Heart right ventricle (tissue), 16 donors: ENCODE measurements at regions of chr5 and their contacts with region 1.

Region 1: DNA sequence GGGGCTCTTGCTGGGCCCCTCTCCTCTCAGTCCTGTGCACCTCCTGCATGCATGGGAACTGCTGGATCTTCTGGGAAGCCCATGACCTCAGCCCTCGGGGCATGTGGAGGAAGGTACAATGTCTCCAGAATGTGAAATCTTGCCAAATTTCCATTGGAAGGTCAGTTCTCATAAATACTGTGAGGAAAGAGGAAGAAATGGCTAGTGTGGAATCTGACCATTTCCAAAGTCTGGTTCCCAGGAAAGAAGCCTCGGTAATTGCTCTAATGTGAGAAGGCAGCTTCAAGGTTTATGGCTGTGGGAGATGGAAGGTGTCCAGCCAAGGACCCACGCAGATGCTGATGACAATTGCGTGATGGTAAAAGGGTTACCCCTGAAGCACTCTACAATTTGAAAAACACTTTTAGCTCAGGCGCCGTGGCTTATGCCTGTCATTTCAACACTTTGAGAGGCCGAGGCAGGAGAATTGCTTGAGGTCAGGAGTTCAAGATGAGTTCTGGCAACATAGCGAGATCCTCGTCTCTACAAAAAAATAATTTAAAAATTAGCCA is 8.1 kb upstream of the IL17B start:
- DNase-seq: no peak
- ATAC-seq: peak in 2 of 8 donors; percentile 21
- H3K4me3 ChIP-seq: no peak overlapping the region
- H3K27ac ChIP-seq: peak overlapping the region; percentile 40 to 95 (median 87)
- H3K4me1 ChIP-seq: peaks cover 10 to 89% (median 67%) of the 10 kb centered on the region in 9 donors
- H3K27me3 ChIP-seq: no peaks in the 10 kb centered on the region
- CTCF ChIP-seq: no peak

Region 2: DNA sequence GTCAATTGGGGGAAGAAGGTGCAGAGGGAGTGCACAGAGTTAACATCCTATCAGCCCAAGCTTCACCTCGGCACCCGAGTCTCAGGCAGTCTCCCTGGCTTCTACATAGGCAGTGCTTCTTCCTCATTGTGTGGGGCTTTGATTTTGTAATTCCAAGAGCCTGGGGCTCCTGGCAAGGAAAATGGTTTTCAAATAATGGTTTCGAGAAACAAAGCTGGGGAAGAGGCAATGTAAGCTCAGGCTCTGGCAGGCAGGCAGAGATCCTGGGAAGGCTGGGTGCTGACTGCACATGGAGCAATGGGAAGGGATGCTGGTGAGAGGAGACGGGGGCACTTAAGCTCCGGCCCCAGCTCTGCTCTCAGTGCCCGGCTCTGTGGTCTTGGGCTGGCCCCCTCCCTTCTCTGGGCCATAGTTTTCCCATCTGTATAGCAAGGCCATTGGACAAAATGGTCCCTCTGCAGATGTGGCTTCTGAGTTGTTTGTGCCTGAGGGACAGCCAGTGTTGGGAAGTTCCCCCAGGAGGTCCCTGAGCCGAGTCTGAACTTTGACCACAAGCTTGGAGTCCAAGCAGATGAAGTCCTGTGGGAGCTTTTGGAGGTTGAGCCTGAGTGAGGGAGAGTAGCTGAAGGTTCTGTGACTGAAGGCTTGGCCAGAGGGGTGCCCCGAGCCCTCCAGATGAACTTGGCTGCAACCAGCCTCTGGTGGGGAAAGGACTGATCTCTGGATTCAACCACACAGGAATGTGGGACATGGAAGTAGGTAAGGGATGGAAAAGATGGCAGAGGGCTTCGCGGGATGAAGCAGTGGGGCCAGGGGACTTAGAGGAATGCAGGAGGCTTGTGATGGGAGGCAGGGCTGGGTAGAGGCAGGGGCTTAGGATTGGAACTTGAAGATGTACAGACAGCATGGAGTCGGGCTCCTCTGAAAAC is 20.4 kb after region 1 on chr5:
- intact Hi-C with region 1: loop called in 1 of 10 experiments (anchors 2 kb)
- DNase-seq: no peak
- ATAC-seq: peak in 1 of 8 donors; percentile 7
- H3K4me3 ChIP-seq: peak overlapping the region; percentile 28 to 64 (median 54)
- H3K27ac ChIP-seq: peak overlapping the region; percentile 66 to 95 (median 80)
- H3K4me1 ChIP-seq: peaks cover under 1 to 40% (median 11%) of the 10 kb centered on the region in 9 donors
- H3K27me3 ChIP-seq: no peaks in the 10 kb centered on the region
- CTCF ChIP-seq: no peak

Region 3: GRCh38 chr5:149422366-149423048 is 35.4 kb after region 1 on chr5:
- intact Hi-C with region 1: loop called in 3 of 10 experiments (anchors 2 to 5 kb)
- DNase-seq: peak; percentile 75 to 87
- ATAC-seq: peak; percentile 65 to 86 (median 76)
- H3K4me3 ChIP-seq: peak overlapping the region in 6 of 10 donors; percentile 2 to 56 (median 38)
- H3K27ac ChIP-seq: peak overlapping the region; percentile 59 to 99 (median 90)
- H3K4me1 ChIP-seq: peaks cover 15 to 100% (median 68%) of the 10 kb centered on the region in 9 donors
- H3K27me3 ChIP-seq: no peaks in the 10 kb centered on the region
- CTCF ChIP-seq: peak in 1 of 9 donors; percentile 8